K562 (cell line): ENCODE measurements at regions of chr5 and their contacts with region 1.

Region 1: GRCh38 chr5:42057254-42057690 is 132.2 kb downstream of the FBXO4 start:
- DNase-seq: peak; percentile 52 to 71 (median 66)
- ATAC-seq: peak; percentile 95
- H3K4me3 ChIP-seq: no peak overlapping the region
- H3K27ac ChIP-seq: no peak overlapping the region
- H3K4me1 ChIP-seq: no peaks in the 10 kb centered on the region
- H3K27me3 ChIP-seq: 0 out of 5 replicates have a peak, but pooled peaks cover 0 to 8% of the 10 kb centered on the region in 2 experiments
- CTCF ChIP-seq: peak; percentile 83 to 86 (median 84)
- EP300 ChIP-seq: no peak
- POLR2A ChIP-seq: no peak
- RAD21 ChIP-seq: peak; percentile 81 to 86

Region 2: DNA sequence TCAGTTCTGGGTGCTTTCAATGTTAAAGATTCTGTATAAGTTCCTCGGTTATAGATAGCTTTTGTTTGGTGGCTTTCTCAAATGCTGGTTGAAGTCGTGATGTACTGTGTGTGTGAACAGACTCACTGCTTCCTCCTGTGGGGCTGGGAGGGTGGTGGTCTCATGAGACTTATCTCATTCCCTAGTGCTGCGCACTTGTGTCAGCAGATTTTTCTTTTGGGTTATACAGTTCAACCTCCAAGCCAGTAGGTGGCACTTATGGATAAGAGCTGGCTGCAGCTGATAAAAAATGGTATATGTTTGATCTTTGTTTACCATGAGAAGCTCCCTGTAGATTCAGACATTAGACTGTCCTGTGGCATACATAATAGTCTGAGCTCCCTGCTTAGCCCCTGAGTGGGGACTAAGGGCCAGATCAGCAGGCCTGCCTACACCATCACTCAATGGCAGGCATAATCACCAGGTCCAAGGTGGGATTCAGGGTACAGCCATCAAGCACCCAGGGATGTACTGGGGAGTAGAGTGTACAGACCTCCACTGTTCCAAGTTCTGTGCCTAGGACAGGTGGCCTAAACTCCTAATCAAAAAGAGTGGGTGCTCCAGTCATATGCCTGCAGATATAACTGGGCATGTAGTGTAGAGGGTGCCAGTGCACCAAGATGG is 361.2 kb before region 1 on chr5:
- CTCF ChIA-PET with region 1: no interaction called
- POLR2A ChIA-PET with region 1: no interaction called
- in situ Hi-C with region 1: no loop called
- intact Hi-C with region 1: loop called (anchors 2 kb)
- DNase-seq: peak in 1 of 4 experiments; percentile 11
- ATAC-seq: peak; percentile 71
- H3K4me3 ChIP-seq: no peak overlapping the region
- H3K27ac ChIP-seq: no peak overlapping the region
- H3K4me1 ChIP-seq: no peaks in the 10 kb centered on the region
- H3K27me3 ChIP-seq: no peaks in the 10 kb centered on the region
- CTCF ChIP-seq: peak in 2 of 3 experiments; percentile 35 to 46; a peak in 3 of 6 replicates
- EP300 ChIP-seq: no peak
- POLR2A ChIP-seq: no peak
- RAD21 ChIP-seq: peak in 1 of 2 experiments; percentile 36; a peak in 1 of 4 replicates